ENCODE measurements at regions of chr5 and their contacts with region 1.

Region 1: GRCh38 chr5:18292146-18292545 is 657.9 kb downstream of the TAF11L14 start:
- DNase-seq: no peak
- H3K4me3 ChIP-seq: no peak overlapping the region
- H3K27ac ChIP-seq: no peak overlapping the region
- H3K4me1 ChIP-seq: no peaks in the 10 kb centered on the region
- H3K27me3 ChIP-seq: no peaks in the 10 kb centered on the region
- CTCF ChIP-seq: no peak

Region 2: DNA sequence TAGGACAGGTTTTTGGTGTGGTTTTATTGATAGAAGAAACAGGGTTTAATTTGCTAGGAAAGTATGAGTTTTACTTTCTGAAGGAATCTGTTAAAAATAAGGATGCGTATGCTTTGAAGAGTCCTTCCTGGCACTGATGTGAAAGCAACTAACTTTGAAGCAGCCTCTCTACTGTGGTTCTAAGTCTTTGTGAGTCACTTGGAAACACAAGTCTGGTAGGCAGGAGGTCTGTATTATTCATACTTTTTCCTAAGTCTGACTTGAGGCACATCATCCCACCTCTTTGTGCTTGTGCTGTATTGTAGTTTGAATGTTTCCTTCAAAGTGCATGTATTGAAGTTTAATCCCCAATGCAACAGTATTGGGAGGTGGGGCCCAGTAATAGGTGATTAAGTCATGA is 528.8 kb before region 1 on chr5:
- CTCF ChIA-PET with region 1: no interaction called
- POLR2A ChIA-PET with region 1: interaction called, 15 read pairs
- intact Hi-C with region 1: no loop called
- DNase-seq: no peak
- H3K4me3 ChIP-seq: no peak overlapping the region
- H3K27ac ChIP-seq: no peak overlapping the region
- H3K4me1 ChIP-seq: no peaks in the 10 kb centered on the region
- H3K27me3 ChIP-seq: no peaks in the 10 kb centered on the region
- CTCF ChIP-seq: no peak

Region 3: GRCh38 chr5:18181575-18181974 is 110.6 kb before region 1 on chr5:
- CTCF ChIA-PET with region 1: interaction called, 11 read pairs
- POLR2A ChIA-PET with region 1: no interaction called
- intact Hi-C with region 1: no loop called
- DNase-seq: no peak
- H3K4me3 ChIP-seq: no peak overlapping the region
- H3K27ac ChIP-seq: no peak overlapping the region
- H3K4me1 ChIP-seq: no peaks in the 10 kb centered on the region
- H3K27me3 ChIP-seq: no peaks in the 10 kb centered on the region
- CTCF ChIP-seq: no peak